MCF 10A (cell line): ENCODE measurements at regions of chr20 and their contacts with region 1.

Region 1: GRCh38 chr20:43955062-43955749 is 40.6 kb downstream of the TOX2 start:
- DNase-seq: peak; percentile 96
- H3K4me3 Mint-ChIP-seq: no peak overlapping the region
- H3K27ac Mint-ChIP-seq: no peak overlapping the region
- H3K4me1 Mint-ChIP-seq: peaks cover 43% of the 10 kb centered on the region
- H3K27me3 Mint-ChIP-seq: no peaks in the 10 kb centered on the region
- CTCF ChIP-seq: no peak

Region 2: GRCh38 chr20:43975096-43975768 is 20.0 kb after region 1 on chr20:
- CTCF ChIA-PET with region 1: interaction called, 5 read pairs
- POLR2A ChIA-PET with region 1: interaction called, 4 read pairs
- intact Hi-C with region 1: loop called (anchors 2 kb)
- DNase-seq: peak; percentile 86
- H3K4me3 Mint-ChIP-seq: no peak overlapping the region
- H3K27ac Mint-ChIP-seq: peak overlapping the region; percentile 75
- H3K4me1 Mint-ChIP-seq: peaks cover 16% of the 10 kb centered on the region
- H3K27me3 Mint-ChIP-seq: no peaks in the 10 kb centered on the region
- CTCF ChIP-seq: no peak

Region 3: DNA sequence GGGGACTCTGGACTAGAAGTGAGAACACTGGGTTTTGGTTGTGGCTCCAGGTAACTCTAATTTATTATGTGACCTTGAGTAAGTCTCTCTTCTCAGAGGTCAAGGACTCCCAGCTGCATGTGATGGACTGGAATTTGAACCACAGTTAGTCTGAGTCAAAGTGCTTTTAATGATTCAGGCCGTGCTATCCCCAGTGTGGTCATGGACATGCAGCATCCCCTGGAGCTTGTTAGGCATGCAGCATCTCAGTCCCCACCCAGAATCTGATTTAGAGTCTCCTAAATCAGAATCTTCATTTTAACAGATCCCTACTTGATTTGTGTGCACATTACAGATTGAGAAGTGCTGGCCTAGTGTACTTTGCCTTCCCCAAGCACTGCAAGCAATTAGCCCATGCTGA is 33.7 kb after region 1 on chr20:
- CTCF ChIA-PET with region 1: no interaction called
- POLR2A ChIA-PET with region 1: no interaction called
- intact Hi-C with region 1: no loop called
- DNase-seq: no peak
- H3K4me3 Mint-ChIP-seq: no peak overlapping the region
- H3K27ac Mint-ChIP-seq: no peak overlapping the region
- H3K4me1 Mint-ChIP-seq: no peaks in the 10 kb centered on the region
- H3K27me3 Mint-ChIP-seq: no peaks in the 10 kb centered on the region
- CTCF ChIP-seq: no peak